Prostate gland (tissue), 2 donors: ENCODE measurements at regions of chr11 and their contacts with region 1.

Region 1: GRCh38 chr11:44556735-44557409 is 8.6 kb upstream of the CD82 start:
- DNase-seq: peak; percentile 58
- H3K4me3 ChIP-seq: no peak overlapping the region
- H3K27ac ChIP-seq: no peak overlapping the region
- H3K4me1 ChIP-seq: no peaks in the 10 kb centered on the region
- H3K27me3 ChIP-seq: no peaks in the 10 kb centered on the region
- CTCF ChIP-seq: peak; percentile 62 to 92 (median 86)
- POLR2A ChIP-seq: no peak

Region 2: DNA sequence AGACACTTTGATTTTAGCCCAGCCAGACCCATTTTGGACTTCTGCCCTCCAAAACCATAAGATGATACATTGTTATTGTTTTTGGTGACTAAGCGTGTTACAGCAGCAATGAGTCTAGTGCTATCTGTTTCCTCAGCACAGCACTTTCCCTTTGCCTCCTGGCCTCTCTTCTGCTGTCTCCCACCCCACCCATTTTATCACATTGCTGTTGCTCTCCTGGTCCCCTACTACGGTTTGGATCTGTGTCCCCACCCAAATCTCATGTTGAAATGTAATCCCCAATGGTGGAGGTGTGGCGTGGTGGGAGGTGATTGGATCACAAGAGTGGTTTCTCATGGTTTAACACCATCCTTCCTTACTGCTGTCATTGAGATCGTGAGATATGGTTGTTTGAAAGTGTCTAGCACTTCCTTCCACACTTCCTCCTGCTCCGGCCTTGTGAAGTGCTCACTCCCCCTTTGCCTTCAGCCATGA is 51.3 kb before region 1 on chr11:
- intact Hi-C with region 1: no loop called
- DNase-seq: no peak
- H3K4me3 ChIP-seq: no peak overlapping the region
- H3K27ac ChIP-seq: no peak overlapping the region
- H3K4me1 ChIP-seq: no peaks in the 10 kb centered on the region
- H3K27me3 ChIP-seq: no peaks in the 10 kb centered on the region
- CTCF ChIP-seq: no peak
- POLR2A ChIP-seq: no peak

Region 3: GRCh38 chr11:44519989-44520737 is 36.7 kb before region 1 on chr11:
- intact Hi-C with region 1: no loop called
- DNase-seq: no peak
- H3K4me3 ChIP-seq: no peak overlapping the region
- H3K27ac ChIP-seq: no peak overlapping the region
- H3K4me1 ChIP-seq: no peaks in the 10 kb centered on the region
- H3K27me3 ChIP-seq: no peaks in the 10 kb centered on the region
- CTCF ChIP-seq: no peak
- POLR2A ChIP-seq: no peak

Region 4: GRCh38 chr11:44615913-44616791 is 59.3 kb after region 1 on chr11:
- intact Hi-C with region 1: loop called (anchors 1 kb)
- DNase-seq: no peak
- H3K4me3 ChIP-seq: no peak overlapping the region
- H3K27ac ChIP-seq: no peak overlapping the region
- H3K4me1 ChIP-seq: no peaks in the 10 kb centered on the region
- H3K27me3 ChIP-seq: no peaks in the 10 kb centered on the region
- CTCF ChIP-seq: no peak
- POLR2A ChIP-seq: no peak

Region 5: DNA sequence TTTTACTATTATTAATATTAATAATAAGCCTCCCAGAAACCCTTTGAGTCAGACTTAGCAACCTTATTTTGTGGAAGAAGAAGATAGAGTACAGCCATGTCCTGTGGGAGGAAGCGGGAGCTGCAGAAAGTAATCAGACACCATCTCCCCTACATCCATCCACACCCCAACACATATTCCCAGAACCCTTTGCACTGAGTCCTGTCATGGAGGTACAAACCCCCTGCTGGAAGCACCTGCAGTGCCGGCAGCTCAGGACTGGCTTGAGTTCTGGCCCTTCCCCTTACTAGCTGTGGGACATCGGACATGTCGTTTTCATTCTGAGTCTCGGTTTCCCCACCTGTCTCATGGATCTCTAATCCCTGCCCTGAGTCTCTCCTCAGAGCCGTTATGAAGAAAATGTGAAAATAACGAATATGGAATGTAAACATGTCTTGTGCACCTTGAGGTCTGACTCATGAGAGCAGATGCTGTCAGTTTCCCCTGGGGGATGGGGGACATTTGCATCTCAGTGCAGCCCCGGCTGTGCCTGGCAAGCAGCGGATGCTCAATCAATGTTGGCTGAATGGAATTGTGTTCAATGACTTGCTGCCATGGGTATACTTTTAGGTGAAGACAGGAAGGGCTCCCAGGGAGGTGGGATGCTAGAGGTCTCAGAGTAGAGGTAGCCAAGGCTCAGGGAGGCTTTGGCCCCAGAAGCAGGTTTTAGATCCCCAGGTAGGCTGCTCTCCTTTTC is 348.4 kb after region 1 on chr11:
- intact Hi-C with region 1: loop called (anchors 2 kb)
- DNase-seq: no peak
- H3K4me3 ChIP-seq: no peak overlapping the region
- H3K27ac ChIP-seq: no peak overlapping the region
- H3K4me1 ChIP-seq: no peaks in the 10 kb centered on the region
- H3K27me3 ChIP-seq: no peaks in the 10 kb centered on the region
- CTCF ChIP-seq: no peak
- POLR2A ChIP-seq: no peak